A549 (cell line): ENCODE measurements at regions of chr17 and their contacts with region 1.

Region 1: GRCh38 chr17:68398691-68399637 is 58.3 kb downstream of the WIPI1 start:
- DNase-seq: peak; percentile 82 to 96
- ATAC-seq: peak; percentile 94 to 97
- H3K4me3 ChIP-seq: no peak overlapping the region
- H3K27ac ChIP-seq: peak overlapping the region; percentile 37 to 64; a peak in 5 of 6 replicates
- H3K4me1 ChIP-seq: 0 out of 3 replicates have a peak, but pooled peaks cover 3% of the 10 kb centered on the region
- CTCF ChIP-seq: peak; percentile 95
- EP300 ChIP-seq: no peak
- POLR2A ChIP-seq: no peak
- RAD21 ChIP-seq: peak; percentile 92 to 95

Region 2: GRCh38 chr17:68247445-68248198 is 151.3 kb before region 1 on chr17 and contains the start of gene AMZ2:
- CTCF ChIA-PET with region 1: interaction called, 25 read pairs
- POLR2A ChIA-PET with region 1: no interaction called
- DNase-seq: peak; percentile 85 to 96
- ATAC-seq: peak; percentile 95 to 98
- H3K4me3 ChIP-seq: peak within 1 kb of the TSS; percentile 67
- H3K27ac ChIP-seq: peak within 1 kb of the TSS; percentile 87 to 94
- H3K4me1 ChIP-seq: peaks cover 9% of the 10 kb centered on the region; the same call in 2 of the 3 replicates
- CTCF ChIP-seq: no peak
- EP300 ChIP-seq: no peak
- POLR2A ChIP-seq: peak; percentile 87
- RAD21 ChIP-seq: no peak
- polyA plus RNA-seq, gene AMZ2: 186 and 201 TPM in 2 replicates

Region 3: GRCh38 chr17:68291844-68292695 is 106.9 kb before region 1 on chr17:
- CTCF ChIA-PET with region 1: interaction called, 7 read pairs
- POLR2A ChIA-PET with region 1: interaction called, 23 read pairs
- DNase-seq: peak; percentile 69 to 89
- ATAC-seq: peak; percentile 83 to 86
- H3K4me3 ChIP-seq: peak overlapping the region; percentile 88
- H3K27ac ChIP-seq: peak overlapping the region; percentile 87 to 92
- H3K4me1 ChIP-seq: peaks cover 9% of the 10 kb centered on the region; the same call in 2 of the 3 replicates
- CTCF ChIP-seq: peak; percentile 10; the same call in 2 of the 3 replicates
- EP300 ChIP-seq: no peak
- POLR2A ChIP-seq: peak; percentile 56
- RAD21 ChIP-seq: peak; percentile 20 to 28; a peak in 2 of 5 replicates

Region 4: GRCh38 chr17:68327823-68328570 is 71.0 kb before region 1 on chr17:
- CTCF ChIA-PET with region 1: interaction called, 15 read pairs
- POLR2A ChIA-PET with region 1: no interaction called
- DNase-seq: no peak
- ATAC-seq: peak in 1 of 2 experiments; percentile 25; a peak in 1 of 6 replicates
- H3K4me3 ChIP-seq: no peak overlapping the region
- H3K27ac ChIP-seq: no peak overlapping the region
- H3K4me1 ChIP-seq: no peaks in the 10 kb centered on the region
- CTCF ChIP-seq: no peak
- EP300 ChIP-seq: no peak
- POLR2A ChIP-seq: no peak
- RAD21 ChIP-seq: no peak

Region 5: DNA sequence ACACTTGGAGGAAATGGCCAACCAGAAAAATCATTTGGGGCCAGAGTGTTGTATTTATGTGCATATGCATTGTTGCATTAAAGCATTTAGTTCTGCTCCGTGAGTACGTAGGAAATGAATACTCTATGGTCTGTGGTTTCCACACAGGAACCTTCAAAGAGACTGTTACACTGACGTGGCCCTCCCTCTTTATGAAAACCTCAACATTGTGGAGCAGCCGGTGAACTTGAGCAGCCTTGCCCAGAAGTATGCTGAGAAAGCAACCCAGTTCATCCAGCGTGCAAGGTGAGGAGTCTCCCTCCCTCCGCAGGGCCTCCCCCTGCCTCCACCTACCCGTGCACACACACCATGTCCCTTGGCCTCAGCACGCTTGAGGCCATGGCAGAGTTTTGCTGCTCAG is 42.4 kb before region 1 on chr17:
- CTCF ChIA-PET with region 1: interaction called, 28 read pairs
- POLR2A ChIA-PET with region 1: no interaction called
- DNase-seq: no peak
- ATAC-seq: no peak
- H3K4me3 ChIP-seq: no peak overlapping the region
- H3K27ac ChIP-seq: no peak overlapping the region; a peak in 1 of 6 replicates
- H3K4me1 ChIP-seq: peaks cover 14% of the 10 kb centered on the region
- CTCF ChIP-seq: no peak
- EP300 ChIP-seq: no peak
- POLR2A ChIP-seq: no peak
- RAD21 ChIP-seq: no peak

Region 6: GRCh38 chr17:68417317-68417716 is 18.4 kb after region 1 on chr17:
- CTCF ChIA-PET with region 1: interaction called, 21 read pairs
- POLR2A ChIA-PET with region 1: no interaction called
- DNase-seq: no peak
- ATAC-seq: no peak
- H3K4me3 ChIP-seq: no peak overlapping the region
- H3K27ac ChIP-seq: no peak overlapping the region
- H3K4me1 ChIP-seq: no peaks in the 10 kb centered on the region
- CTCF ChIP-seq: no peak
- EP300 ChIP-seq: no peak
- POLR2A ChIP-seq: no peak
- RAD21 ChIP-seq: no peak

Region 7: DNA sequence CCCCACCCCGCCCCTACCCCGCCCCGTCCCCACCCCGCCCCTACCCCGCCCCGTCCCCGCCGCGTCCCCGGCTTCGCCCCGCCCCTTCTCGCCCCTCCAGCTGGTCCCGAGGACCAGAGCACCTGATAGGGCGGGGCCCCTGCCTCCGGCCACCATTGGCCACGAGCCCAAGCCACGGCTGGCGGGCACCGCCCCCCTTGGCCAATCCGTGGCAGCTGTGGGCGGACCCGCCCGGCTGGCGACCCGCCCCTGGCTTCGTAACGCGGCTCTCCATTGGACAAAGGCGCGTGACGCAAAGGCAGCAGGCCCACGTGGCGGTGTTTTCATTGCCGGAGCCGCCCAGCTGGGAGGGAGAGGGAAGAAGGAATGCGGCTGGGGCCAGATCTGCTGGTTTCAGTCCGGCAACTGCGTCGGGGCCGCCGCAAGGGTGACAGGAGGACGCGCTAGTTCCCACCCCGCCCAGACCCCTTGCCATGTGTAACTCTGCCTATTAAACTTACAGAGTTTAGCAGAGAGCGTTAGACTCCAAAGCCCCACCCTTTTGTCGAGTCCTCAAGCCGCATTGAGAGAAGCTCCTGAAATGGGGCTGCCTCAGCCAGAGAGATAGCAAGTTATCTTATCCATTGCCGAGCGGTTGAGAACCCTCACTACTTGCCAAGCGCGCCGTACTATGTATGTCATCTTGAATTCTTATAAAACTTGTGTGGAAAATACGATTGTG is 58.7 kb after region 1 on chr17:
- CTCF ChIA-PET with region 1: interaction called, 14 read pairs
- POLR2A ChIA-PET with region 1: no interaction called
- DNase-seq: peak; percentile 97 to 98
- ATAC-seq: peak; percentile 87 to 93
- H3K4me3 ChIP-seq: peak overlapping the region; percentile 92
- H3K27ac ChIP-seq: no peak overlapping the region
- H3K4me1 ChIP-seq: peaks cover 17% of the 10 kb centered on the region
- CTCF ChIP-seq: no peak
- EP300 ChIP-seq: no peak
- POLR2A ChIP-seq: no peak
- RAD21 ChIP-seq: no peak

Region 8: DNA sequence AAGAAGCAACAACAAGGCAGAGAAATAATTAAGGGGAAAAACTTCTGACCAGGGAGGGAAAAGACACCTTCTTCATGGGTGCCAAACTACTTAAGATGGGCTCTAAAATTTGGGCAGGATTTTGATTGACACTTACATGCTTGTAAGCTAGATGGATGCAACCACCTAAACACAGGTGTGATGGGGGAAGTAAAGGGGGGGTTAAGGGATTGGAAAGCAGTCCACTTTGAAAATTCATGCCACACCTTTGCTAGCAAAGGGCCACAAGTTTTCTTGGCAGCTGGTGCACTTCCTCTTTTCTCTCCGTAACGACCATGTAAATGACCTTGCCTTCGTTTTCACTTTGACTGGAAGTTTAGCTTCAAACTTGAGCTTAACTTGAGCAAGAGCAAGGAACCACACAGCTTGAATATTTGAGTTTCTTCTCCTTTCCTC is 98.9 kb after region 1 on chr17:
- CTCF ChIA-PET with region 1: no interaction called
- POLR2A ChIA-PET with region 1: no interaction called
- DNase-seq: no peak
- ATAC-seq: no peak
- H3K4me3 ChIP-seq: no peak overlapping the region
- H3K27ac ChIP-seq: no peak overlapping the region
- H3K4me1 ChIP-seq: no peaks in the 10 kb centered on the region
- CTCF ChIP-seq: no peak
- EP300 ChIP-seq: no peak
- POLR2A ChIP-seq: no peak
- RAD21 ChIP-seq: no peak